Aorta (tissue), 5 donors: ENCODE measurements at regions of chr11 and their contacts with region 1.

Region 1: GRCh38 chr11:67507864-67508485 is at the start of gene CDK2AP2:
- DNase-seq: peak; percentile 100
- ATAC-seq: peak; percentile 90
- H3K4me3 ChIP-seq: peak within 1 kb of the TSS; percentile 59 to 62
- H3K27ac ChIP-seq: peak within 1 kb of the TSS; percentile 65 to 96
- H3K4me1 ChIP-seq: no peaks in the 10 kb centered on the region
- H3K27me3 ChIP-seq: no peaks in the 10 kb centered on the region
- total RNA-seq, gene CDK2AP2: 40.8 to 65.6 TPM

Region 2: GRCh38 chr11:66510271-66510989 is 997.5 kb before region 1 on chr11 and contains the start of gene BBS1:
- intact Hi-C with region 1: no loop called
- DNase-seq: peak; percentile 93 to 96
- ATAC-seq: peak; percentile 95
- H3K4me3 ChIP-seq: peak within 1 kb of the TSS; percentile 49 to 69
- H3K27ac ChIP-seq: peak within 1 kb of the TSS in 1 of 2 donors; percentile 1
- H3K4me1 ChIP-seq: no peaks in the 10 kb centered on the region
- H3K27me3 ChIP-seq: no peaks in the 10 kb centered on the region
- total RNA-seq, gene BBS1: 27.2 to 58.1 TPM

Region 3: GRCh38 chr11:66976048-66976467 is 531.9 kb before region 1 on chr11:
- intact Hi-C with region 1: no loop called
- DNase-seq: no peak
- ATAC-seq: no peak
- H3K4me3 ChIP-seq: no peak overlapping the region
- H3K27ac ChIP-seq: no peak overlapping the region
- H3K4me1 ChIP-seq: peaks cover 0 to 2% of the 10 kb centered on the region in 2 donors
- H3K27me3 ChIP-seq: no peaks in the 10 kb centered on the region

Region 4: GRCh38 chr11:67353317-67354074 is 154.5 kb before region 1 on chr11 and contains the start of gene POLD4:
- intact Hi-C with region 1: loop called in 1 of 2 experiments (anchors 5 kb)
- DNase-seq: peak; percentile 99 to 100
- ATAC-seq: peak; percentile 93
- H3K4me3 ChIP-seq: peak within 1 kb of the TSS; percentile 36 to 37
- H3K27ac ChIP-seq: peak within 1 kb of the TSS; percentile 67 to 92
- H3K4me1 ChIP-seq: peaks cover 6 to 10% of the 10 kb centered on the region in 2 donors
- H3K27me3 ChIP-seq: no peaks in the 10 kb centered on the region
- total RNA-seq, gene POLD4: 82.7 to 85.1 TPM

Region 5: GRCh38 chr11:67401495-67402191 is 106.3 kb before region 1 on chr11 and contains the start of gene PPP1CA:
- intact Hi-C with region 1: loop called (anchors 1 to 10 kb)
- DNase-seq: peak; percentile 94 to 97
- ATAC-seq: peak; percentile 95
- H3K4me3 ChIP-seq: peak within 1 kb of the TSS; percentile 60 to 66
- H3K27ac ChIP-seq: peak within 1 kb of the TSS in 1 of 2 donors; percentile 75
- H3K4me1 ChIP-seq: no peaks in the 10 kb centered on the region
- H3K27me3 ChIP-seq: no peaks in the 10 kb centered on the region
- total RNA-seq, gene PPP1CA: 61.7 to 64.8 TPM

Region 6: DNA sequence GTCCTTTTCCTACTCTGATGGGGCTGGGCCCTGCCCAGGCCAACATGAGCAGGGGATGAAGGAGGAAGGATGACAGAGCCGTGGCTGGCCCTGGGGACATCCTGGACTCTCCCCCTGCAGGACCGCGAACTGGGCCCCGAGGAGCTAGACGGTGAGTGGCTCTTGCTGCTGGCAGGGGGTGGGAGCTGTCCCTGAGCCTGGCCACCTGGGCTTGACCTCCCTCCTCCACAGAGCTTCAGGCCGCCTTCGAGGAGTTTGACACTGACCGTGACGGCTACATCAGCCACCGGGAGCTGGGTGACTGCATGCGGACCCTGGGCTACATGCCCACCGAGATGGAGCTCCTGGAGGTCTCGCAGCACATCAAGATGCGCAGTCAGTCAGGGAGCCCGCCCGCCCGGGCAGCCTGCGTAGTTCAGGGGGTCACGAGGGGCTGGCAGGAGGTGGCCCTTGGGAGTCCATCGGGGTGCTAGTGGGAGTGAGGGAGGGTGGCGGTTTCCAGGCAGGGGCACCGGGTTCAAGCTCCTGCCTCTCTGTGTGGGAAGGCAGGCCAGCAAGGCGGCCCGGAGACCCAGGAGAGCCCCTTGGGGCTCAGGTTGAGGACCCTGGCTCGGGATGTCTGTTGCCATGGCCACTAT is 51.8 kb before region 1 on chr11:
- intact Hi-C with region 1: no loop called
- DNase-seq: no peak
- ATAC-seq: no peak
- H3K4me3 ChIP-seq: no peak overlapping the region
- H3K27ac ChIP-seq: no peak overlapping the region
- H3K4me1 ChIP-seq: no peaks in the 10 kb centered on the region
- H3K27me3 ChIP-seq: no peaks in the 10 kb centered on the region

Region 7: DNA sequence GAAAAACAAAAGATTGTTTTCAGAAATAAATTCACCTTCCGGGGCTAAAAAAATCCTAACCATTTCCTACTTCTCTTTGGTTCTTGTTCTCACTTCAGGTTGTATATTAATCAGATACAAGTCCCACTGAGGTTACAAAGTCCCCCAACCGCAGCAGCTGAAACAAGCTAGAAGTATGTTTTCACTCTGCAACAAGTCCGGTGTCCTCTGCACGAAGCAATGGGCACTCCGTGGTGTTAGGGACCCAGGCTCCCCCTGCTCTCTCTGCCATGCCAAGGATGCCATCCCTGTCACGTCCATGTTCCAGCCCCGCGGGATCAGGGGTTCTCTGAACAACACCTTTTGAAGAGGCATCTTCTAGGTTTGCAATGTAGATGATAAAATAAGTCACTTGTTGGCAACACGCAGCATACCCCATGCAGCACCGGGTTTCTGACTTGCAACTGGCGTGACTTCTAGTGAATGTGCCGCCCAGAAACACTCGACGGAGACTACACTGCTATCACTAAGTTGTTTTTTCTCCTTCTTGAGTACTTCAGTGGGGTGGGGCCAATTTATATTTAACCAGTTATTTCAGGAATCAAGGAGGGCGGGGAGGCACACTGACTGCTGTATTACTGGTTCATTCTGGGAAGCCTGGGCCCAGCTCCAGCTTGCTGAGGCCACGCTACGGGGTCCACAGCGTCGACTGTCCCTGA is 50.3 kb after region 1 on chr11:
- intact Hi-C with region 1: loop called (anchors 5 kb)
- DNase-seq: peak; percentile 82 to 90
- ATAC-seq: peak; percentile 70
- H3K4me3 ChIP-seq: peak overlapping the region in 1 of 2 donors; percentile 18
- H3K27ac ChIP-seq: peak overlapping the region; percentile 52 to 90
- H3K4me1 ChIP-seq: peaks cover 0 to 3% of the 10 kb centered on the region in 2 donors
- H3K27me3 ChIP-seq: no peaks in the 10 kb centered on the region

Region 8: GRCh38 chr11:67583247-67584204 is 75.6 kb after region 1 on chr11 and contains the start of gene GSTP1:
- intact Hi-C with region 1: loop called in 1 of 2 experiments (anchors 5 kb)
- DNase-seq: peak; percentile 95 to 98
- ATAC-seq: peak; percentile 97
- H3K4me3 ChIP-seq: peak within 1 kb of the TSS; percentile 58 to 69
- H3K27ac ChIP-seq: peak within 1 kb of the TSS; percentile 80 to 95
- H3K4me1 ChIP-seq: no peaks in the 10 kb centered on the region
- H3K27me3 ChIP-seq: no peaks in the 10 kb centered on the region
- total RNA-seq, gene GSTP1: 371 to 432 TPM